Activated CD8-positive, alpha-beta memory T cell treated with anti-CD3 and anti-CD28 coated beads, Interleukin-2, amount 10 ng/mL, durations not matched to agents 7 days and 5 days (primary cell): ENCODE measurements at regions of chr6 and their contacts with region 1.

Region 1: DNA sequence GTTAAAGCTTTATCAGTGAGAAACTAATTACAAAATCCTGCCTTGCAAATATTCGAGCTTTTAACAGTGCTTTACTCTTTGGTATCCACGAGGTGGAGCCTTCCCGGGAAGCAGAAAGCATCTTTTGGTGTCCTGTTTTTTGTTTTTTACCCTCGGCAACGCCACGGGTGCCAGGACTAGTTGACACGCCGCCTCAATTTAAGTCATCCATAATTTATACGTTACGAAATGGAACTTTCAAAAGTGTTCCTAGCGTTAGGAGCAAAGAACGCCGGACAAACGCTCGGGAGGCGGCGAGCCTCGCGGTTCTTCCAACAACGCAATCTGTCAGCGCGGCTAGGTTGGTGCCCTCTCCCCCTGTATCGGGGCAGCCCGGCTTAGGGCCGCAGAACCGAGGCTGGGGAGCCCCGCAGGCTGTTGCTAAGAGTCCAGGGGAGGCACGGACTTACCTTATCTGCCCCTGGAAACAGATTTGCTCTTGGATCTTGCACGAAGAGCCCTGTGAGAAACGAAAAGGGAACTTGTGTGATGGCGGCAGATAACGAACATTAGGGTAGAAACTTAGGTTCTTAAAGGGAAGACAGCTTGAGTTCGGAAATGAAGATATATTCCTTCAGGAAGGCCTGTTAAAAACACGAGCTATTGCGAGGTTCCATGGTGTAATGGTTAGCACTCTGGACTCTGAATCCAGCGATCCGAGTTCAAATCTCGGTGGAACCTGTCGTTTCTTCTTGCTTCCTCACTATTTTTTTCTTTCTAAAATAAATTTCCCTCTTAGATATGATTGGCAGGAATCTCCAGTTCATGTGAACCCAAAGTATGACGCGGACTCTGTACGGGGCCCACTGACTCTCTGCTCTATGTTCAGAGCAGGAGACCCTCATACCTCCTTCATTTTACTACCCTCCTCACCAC is 46.2 kb upstream of the ZNF184 start:
- DNase-seq: peak; percentile 63
- ATAC-seq: peak; percentile 73
- H3K4me3 Mint-ChIP-seq: peak overlapping the region; percentile 81
- H3K27ac Mint-ChIP-seq: peak overlapping the region; percentile 69
- H3K4me1 Mint-ChIP-seq: peaks cover 15% of the 10 kb centered on the region
- H3K27me3 Mint-ChIP-seq: peaks cover 26% of the 10 kb centered on the region

Region 2: GRCh38 chr6:27502508-27503435 is 16.4 kb before region 1 on chr6:
- CTCF ChIA-PET with region 1: interaction called, 16 read pairs
- DNase-seq: peak; percentile 79
- ATAC-seq: peak; percentile 79
- H3K4me3 Mint-ChIP-seq: peak overlapping the region; percentile 80
- H3K27ac Mint-ChIP-seq: peak overlapping the region; percentile 71
- H3K4me1 Mint-ChIP-seq: peaks cover 25% of the 10 kb centered on the region
- H3K27me3 Mint-ChIP-seq: peaks cover 52% of the 10 kb centered on the region

Region 3: DNA sequence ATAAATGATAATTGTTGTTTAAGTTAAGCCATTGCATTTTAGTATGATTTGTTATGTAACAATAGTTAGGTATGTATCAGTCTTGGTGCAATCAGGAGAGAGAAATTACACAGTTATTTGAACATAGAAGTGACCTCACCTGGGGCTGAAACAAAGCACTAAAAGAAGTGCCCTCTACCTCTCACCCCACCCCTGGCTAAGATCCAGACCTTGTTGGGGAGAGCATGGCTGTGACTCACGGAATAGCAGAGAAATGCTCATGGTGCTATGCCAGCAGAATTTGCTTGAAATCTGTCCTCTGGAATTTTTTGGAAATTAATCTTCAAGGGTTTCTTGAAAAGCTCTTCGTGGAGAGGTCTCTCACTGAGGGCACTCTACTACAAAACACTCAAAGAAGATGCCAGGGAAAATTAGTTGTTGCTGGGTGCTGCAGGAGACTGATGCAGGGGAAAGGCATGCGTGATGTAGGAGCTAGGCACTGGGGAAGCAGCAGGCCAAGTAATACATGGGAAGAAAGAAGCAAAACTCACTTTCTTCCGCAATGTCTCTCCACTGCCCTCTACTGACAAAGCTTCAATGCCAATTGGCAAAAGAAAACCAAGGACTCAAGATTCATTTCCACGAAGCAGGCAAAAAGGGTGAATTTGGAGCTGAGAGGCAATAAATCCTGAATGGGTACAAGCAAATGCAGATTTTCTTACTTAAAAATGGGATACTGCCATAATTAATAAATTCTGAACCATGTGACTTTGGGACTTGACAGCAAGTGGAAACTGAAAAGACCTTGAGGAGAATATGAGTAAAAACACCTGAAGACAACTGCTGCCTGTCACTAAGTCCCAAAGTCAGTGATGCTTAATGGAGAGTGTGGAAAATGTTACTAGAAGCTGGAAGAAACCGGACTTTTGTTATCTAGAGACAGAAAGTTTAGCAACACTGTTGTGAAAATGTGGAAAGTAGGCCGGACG is 90.1 kb after region 1 on chr6:
- CTCF ChIA-PET with region 1: interaction called, 23 read pairs
- DNase-seq: no peak
- ATAC-seq: no peak
- H3K4me3 Mint-ChIP-seq: no peak overlapping the region
- H3K27ac Mint-ChIP-seq: no peak overlapping the region
- H3K4me1 Mint-ChIP-seq: peaks cover 21% of the 10 kb centered on the region
- H3K27me3 Mint-ChIP-seq: peaks cover 49% of the 10 kb centered on the region

Region 4: GRCh38 chr6:27726620-27727023 is 207.5 kb after region 1 on chr6:
- CTCF ChIA-PET with region 1: no interaction called
- DNase-seq: no peak
- ATAC-seq: no peak
- H3K4me3 Mint-ChIP-seq: no peak overlapping the region
- H3K27ac Mint-ChIP-seq: no peak overlapping the region
- H3K4me1 Mint-ChIP-seq: peaks cover 2% of the 10 kb centered on the region
- H3K27me3 Mint-ChIP-seq: peaks cover 64% of the 10 kb centered on the region